ENCODE measurements at regions of chr1 and their contacts with region 1.

Region 1: GRCh38 chr1:222455188-222455879 is 92.6 kb downstream of the HHIPL2 start:
- DNase-seq: peak; percentile 68 to 91 (median 83)
- ATAC-seq: peak; percentile 99
- H3K4me3 ChIP-seq: no peak overlapping the region
- H3K4me3 Mint-ChIP-seq: peak overlapping the region; percentile 0
- H3K27ac ChIP-seq: no peak overlapping the region
- H3K27ac Mint-ChIP-seq: peak overlapping the region; percentile 2
- H3K4me1 ChIP-seq: peaks cover 6% of the 10 kb centered on the region
- H3K4me1 Mint-ChIP-seq: peaks cover 16% of the 10 kb centered on the region
- H3K27me3 ChIP-seq: no peaks in the 10 kb centered on the region
- H3K27me3 Mint-ChIP-seq: no peaks in the 10 kb centered on the region
- CTCF ChIP-seq: peak; percentile 90

Region 2: GRCh38 chr1:220879076-220879508 is 1576.2 kb before region 1 on chr1 and contains the start of gene HLX:
- CTCF ChIA-PET with region 1: no interaction called
- POLR2A ChIA-PET with region 1: no interaction called
- intact Hi-C with region 1: loop called in 1 of 2 experiments (anchors 5 kb)
- DNase-seq: peak in 1 of 9 experiments; percentile 36
- ATAC-seq: no peak
- H3K4me3 ChIP-seq: peak within 1 kb of the TSS; percentile 12 to 37
- H3K4me3 Mint-ChIP-seq: peak within 1 kb of the TSS; percentile 71
- H3K27ac ChIP-seq: no peak within 1 kb of the TSS
- H3K27ac Mint-ChIP-seq: no peak within 1 kb of the TSS
- H3K4me1 ChIP-seq: peaks cover 19% of the 10 kb centered on the region
- H3K4me1 Mint-ChIP-seq: peaks cover 31% of the 10 kb centered on the region
- H3K27me3 ChIP-seq: peaks cover 16 to 25% of the 10 kb centered on the region in 2 experiments
- H3K27me3 Mint-ChIP-seq: peaks cover 81% of the 10 kb centered on the region
- CTCF ChIP-seq: no peak
- total RNA-seq, gene HLX: not detected

Region 3: GRCh38 chr1:221543529-221544120 is 911.7 kb before region 1 on chr1:
- CTCF ChIA-PET with region 1: no interaction called
- POLR2A ChIA-PET with region 1: no interaction called
- intact Hi-C with region 1: loop called (anchors 2 to 10 kb)
- DNase-seq: peak in 2 of 9 experiments; percentile 20 to 30
- ATAC-seq: no peak
- H3K4me3 ChIP-seq: no peak overlapping the region
- H3K4me3 Mint-ChIP-seq: no peak overlapping the region
- H3K27ac ChIP-seq: no peak overlapping the region
- H3K27ac Mint-ChIP-seq: no peak overlapping the region
- H3K4me1 ChIP-seq: no peaks in the 10 kb centered on the region
- H3K4me1 Mint-ChIP-seq: no peaks in the 10 kb centered on the region
- H3K27me3 ChIP-seq: no peaks in the 10 kb centered on the region
- H3K27me3 Mint-ChIP-seq: peaks cover 17% of the 10 kb centered on the region
- CTCF ChIP-seq: peak; percentile 44

Region 4: DNA sequence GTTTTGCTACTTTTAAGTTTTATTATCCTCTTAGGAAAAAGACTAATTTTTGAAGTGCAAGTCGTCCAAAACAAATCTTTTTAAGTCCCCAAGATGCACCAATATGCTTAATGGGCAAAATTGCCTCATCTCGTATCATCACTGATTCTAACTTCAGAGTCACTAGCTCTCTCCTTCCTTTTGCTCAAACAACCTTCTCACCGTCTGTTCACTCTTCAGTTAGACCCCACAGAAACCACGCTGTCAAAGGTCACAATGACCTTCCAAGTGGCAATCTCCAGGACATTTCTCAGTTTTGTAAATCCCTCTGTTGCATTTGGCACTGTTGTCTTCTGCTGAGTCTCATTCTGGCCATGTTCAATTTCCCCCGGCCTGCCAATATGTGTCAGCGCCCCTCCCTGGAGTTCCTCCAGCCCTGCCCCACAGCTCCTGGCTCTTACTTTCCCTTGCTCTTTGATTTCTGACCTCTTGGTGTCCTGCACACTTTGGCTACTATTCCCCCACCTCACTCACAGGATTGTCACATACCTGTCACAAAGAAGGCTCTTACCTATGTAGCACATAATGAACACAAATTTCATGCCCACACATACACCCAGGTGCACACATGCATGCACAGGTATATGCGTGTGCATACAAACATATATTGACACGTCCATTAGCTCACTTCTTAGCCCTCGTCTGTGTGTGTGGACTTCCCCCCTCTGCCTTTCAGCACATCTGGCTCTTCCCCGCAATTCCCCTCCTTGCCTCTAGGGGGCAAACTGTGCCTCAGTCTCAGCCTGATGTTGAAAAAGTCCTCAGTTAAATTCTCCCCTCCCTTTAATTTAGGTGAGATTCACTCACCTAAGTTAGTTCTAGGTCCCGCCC is 359.5 kb before region 1 on chr1:
- CTCF ChIA-PET with region 1: interaction called, 173 read pairs
- POLR2A ChIA-PET with region 1: no interaction called
- intact Hi-C with region 1: loop called (anchors 1 kb)
- DNase-seq: peak; percentile 13 to 75 (median 57)
- ATAC-seq: peak; percentile 77
- H3K4me3 ChIP-seq: no peak overlapping the region
- H3K4me3 Mint-ChIP-seq: no peak overlapping the region
- H3K27ac ChIP-seq: no peak overlapping the region
- H3K27ac Mint-ChIP-seq: no peak overlapping the region
- H3K4me1 ChIP-seq: no peaks in the 10 kb centered on the region
- H3K4me1 Mint-ChIP-seq: no peaks in the 10 kb centered on the region
- H3K27me3 ChIP-seq: no peaks in the 10 kb centered on the region
- H3K27me3 Mint-ChIP-seq: peaks cover 3% of the 10 kb centered on the region
- CTCF ChIP-seq: peak; percentile 93

Region 5: DNA sequence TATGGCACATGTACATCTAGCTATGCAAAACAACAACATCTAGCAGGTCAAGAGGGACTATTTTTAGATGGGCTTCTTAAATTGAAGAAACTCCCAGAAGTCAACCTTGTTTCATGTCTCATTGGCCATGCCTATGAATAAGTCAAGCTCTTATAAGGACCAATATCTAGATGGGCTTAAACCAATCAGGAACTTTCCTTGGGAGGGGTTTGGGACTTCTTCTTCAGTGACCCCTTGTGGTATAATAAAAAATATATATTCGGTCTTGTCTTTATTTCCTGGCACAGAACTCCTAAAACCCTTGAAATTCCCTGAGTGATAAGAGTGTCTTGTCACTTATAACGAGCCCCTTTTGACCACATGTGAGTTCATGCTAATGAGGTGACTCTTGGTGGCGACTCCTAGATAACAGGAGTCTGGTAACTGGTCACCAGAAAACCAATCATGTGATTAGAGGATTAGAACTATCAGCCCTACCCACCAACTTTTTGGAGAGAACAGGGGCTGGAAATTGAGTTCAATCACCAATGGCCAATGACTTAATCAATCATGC is 125.8 kb before region 1 on chr1:
- CTCF ChIA-PET with region 1: interaction called, 7 read pairs
- POLR2A ChIA-PET with region 1: no interaction called
- intact Hi-C with region 1: loop called in 1 of 2 experiments (anchors 10 kb)
- DNase-seq: no peak
- ATAC-seq: no peak
- H3K4me3 ChIP-seq: no peak overlapping the region
- H3K4me3 Mint-ChIP-seq: no peak overlapping the region
- H3K27ac ChIP-seq: no peak overlapping the region
- H3K27ac Mint-ChIP-seq: no peak overlapping the region
- H3K4me1 ChIP-seq: no peaks in the 10 kb centered on the region
- H3K4me1 Mint-ChIP-seq: peaks cover 6% of the 10 kb centered on the region
- H3K27me3 ChIP-seq: no peaks in the 10 kb centered on the region
- H3K27me3 Mint-ChIP-seq: no peaks in the 10 kb centered on the region
- CTCF ChIP-seq: no peak

Region 6: GRCh38 chr1:222465211-222466041 is 10.1 kb after region 1 on chr1:
- CTCF ChIA-PET with region 1: interaction called, 37 read pairs
- POLR2A ChIA-PET with region 1: no interaction called
- intact Hi-C with region 1: no loop called
- DNase-seq: peak; percentile 66 to 89 (median 71)
- ATAC-seq: peak; percentile 94
- H3K4me3 ChIP-seq: peak overlapping the region; percentile 54 to 68
- H3K4me3 Mint-ChIP-seq: peak overlapping the region; percentile 85
- H3K27ac ChIP-seq: peak overlapping the region; percentile 58 to 65
- H3K27ac Mint-ChIP-seq: peak overlapping the region; percentile 93
- H3K4me1 ChIP-seq: peaks cover 6% of the 10 kb centered on the region
- H3K4me1 Mint-ChIP-seq: peaks cover 14% of the 10 kb centered on the region
- H3K27me3 ChIP-seq: no peaks in the 10 kb centered on the region
- H3K27me3 Mint-ChIP-seq: no peaks in the 10 kb centered on the region
- CTCF ChIP-seq: peak; percentile 100

Region 7: DNA sequence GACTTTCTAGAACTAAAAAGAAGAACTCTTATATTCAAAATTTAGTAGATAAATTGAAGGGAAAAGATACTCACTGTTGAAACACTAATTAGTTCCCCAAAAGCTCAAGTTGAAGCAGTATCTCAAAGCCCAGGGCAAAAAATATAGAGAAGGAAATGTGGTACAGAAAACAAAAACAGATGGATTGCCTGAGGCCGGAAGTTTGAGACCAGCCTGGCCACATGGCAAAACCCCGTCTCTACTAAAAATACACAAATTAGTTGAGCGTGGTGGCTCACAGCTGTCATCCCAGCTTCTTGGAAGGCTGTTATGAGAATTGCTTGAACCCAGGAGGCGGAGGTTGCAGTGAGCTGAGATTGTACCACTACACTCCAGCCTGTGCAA is 317.7 kb after region 1 on chr1:
- CTCF ChIA-PET with region 1: no interaction called
- POLR2A ChIA-PET with region 1: no interaction called
- intact Hi-C with region 1: no loop called
- DNase-seq: peak in 3 of 9 experiments; percentile 11 to 20 (median 16)
- ATAC-seq: peak; percentile 29
- H3K4me3 ChIP-seq: no peak overlapping the region
- H3K4me3 Mint-ChIP-seq: no peak overlapping the region
- H3K27ac ChIP-seq: no peak overlapping the region
- H3K27ac Mint-ChIP-seq: peak overlapping the region; percentile 58
- H3K4me1 ChIP-seq: peaks cover 8% of the 10 kb centered on the region
- H3K4me1 Mint-ChIP-seq: peaks cover 14% of the 10 kb centered on the region
- H3K27me3 ChIP-seq: no peaks in the 10 kb centered on the region
- H3K27me3 Mint-ChIP-seq: no peaks in the 10 kb centered on the region
- CTCF ChIP-seq: no peak